ENCODE measurements at regions of chr1 and their contacts with region 1.

Region 1: GRCh38 chr1:203534527-203535230 is 40.7 kb downstream of the OPTC start:
- DNase-seq: no peak
- ATAC-seq: peak; percentile 55; the same call in 1 of the 2 replicates
- H3K4me3 ChIP-seq: no peak overlapping the region
- H3K27ac ChIP-seq: no peak overlapping the region
- H3K4me1 ChIP-seq: no peaks in the 10 kb centered on the region; the same call in 1 of the 2 replicates
- H3K27me3 ChIP-seq: no peaks in the 10 kb centered on the region
- CTCF ChIP-seq: no peak

Region 2: DNA sequence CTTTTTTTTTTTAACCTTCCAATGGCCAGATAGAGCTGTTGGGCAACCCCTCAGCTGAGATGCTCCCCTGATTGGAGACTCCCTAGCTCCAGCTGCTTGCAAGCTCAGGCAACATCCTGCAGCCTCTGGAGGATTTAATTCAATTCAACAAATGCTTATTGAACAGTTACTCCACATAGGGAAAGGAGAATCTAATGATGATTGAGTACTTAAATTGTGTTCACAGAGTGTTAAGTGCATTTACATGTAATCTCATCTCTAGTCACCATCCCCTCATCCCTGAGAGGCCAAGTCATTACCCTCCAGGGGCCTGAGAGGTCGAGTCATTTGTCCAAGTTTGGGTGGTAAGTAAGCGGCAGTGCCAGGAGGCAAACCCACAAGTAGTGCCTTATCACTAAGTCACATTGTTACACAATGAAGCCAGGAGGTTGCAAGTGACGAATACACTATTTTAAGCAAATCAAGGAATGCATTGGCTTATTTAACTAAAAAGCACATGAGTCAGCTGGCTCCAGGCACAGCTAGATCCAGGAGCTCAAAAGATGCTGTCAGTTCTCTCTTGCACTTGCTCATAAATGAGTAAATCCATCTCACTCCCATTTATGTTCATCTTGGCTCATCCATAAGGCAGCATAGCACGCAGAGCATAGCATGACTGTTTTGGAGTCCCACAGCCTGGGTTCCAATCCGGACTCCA is 23.5 kb after region 1 on chr1:
- CTCF ChIA-PET with region 1: no interaction called
- POLR2A ChIA-PET with region 1: interaction called, 18 read pairs
- in situ Hi-C with region 1: no loop called
- intact Hi-C with region 1: no loop called
- DNase-seq: peak; percentile 81
- ATAC-seq: peak; percentile 72
- H3K4me3 ChIP-seq: no peak overlapping the region
- H3K27ac ChIP-seq: no peak overlapping the region
- H3K4me1 ChIP-seq: no peaks in the 10 kb centered on the region
- H3K27me3 ChIP-seq: no peaks in the 10 kb centered on the region
- CTCF ChIP-seq: no peak

Measured in Panc1 (cell line).